Naive thymus-derived CD4-positive, alpha-beta T cell (primary cell): ENCODE measurements at regions of chr15 and their contacts with region 1.

Region 1: DNA sequence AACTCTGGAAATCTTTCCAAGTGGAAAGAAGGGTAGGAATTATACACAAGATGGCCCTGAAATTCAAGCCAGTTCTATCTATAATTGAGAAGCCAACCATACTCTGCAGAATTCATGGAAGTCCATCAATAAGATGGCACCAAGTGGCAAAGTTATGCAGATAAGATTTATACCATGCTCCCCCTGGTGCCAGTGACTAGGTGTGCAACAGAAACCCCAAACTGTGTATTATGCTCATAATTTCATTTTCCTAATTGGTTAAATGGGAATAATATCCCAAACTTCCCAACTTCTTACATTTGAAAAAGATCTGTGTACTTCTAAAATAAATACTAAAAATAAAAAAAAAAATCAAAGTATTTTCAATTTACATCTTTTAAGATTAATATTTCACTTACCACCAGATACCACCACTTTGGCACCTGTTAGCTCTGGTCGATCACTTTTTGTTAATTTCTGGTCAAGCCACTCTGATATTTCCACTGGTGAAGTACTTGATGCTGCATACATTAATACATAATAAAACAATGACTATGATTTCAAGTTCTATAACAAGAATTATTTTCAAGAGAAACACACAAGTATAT is 25.9 kb downstream of the ETFA start:
- DNase-seq: peak in 2 of 9 donors; percentile 2 to 9
- ATAC-seq: no peak
- H3K4me3 ChIP-seq: no peak overlapping the region
- H3K4me3 Mint-ChIP-seq: peak overlapping the region in 2 of 10 donors; percentile 69 to 82
- H3K27ac ChIP-seq: peak overlapping the region; percentile 69
- H3K27ac Mint-ChIP-seq: peak overlapping the region in 2 of 9 donors; percentile 93 to 94
- H3K4me1 ChIP-seq: peaks cover 11 to 27% of the 10 kb centered on the region in 2 donors
- H3K4me1 Mint-ChIP-seq: peaks cover 13 to 42% (median 31%) of the 10 kb centered on the region in 7 donors
- H3K27me3 ChIP-seq: no peaks in the 10 kb centered on the region
- H3K27me3 Mint-ChIP-seq: no peaks in the 10 kb centered on the region

Region 2: DNA sequence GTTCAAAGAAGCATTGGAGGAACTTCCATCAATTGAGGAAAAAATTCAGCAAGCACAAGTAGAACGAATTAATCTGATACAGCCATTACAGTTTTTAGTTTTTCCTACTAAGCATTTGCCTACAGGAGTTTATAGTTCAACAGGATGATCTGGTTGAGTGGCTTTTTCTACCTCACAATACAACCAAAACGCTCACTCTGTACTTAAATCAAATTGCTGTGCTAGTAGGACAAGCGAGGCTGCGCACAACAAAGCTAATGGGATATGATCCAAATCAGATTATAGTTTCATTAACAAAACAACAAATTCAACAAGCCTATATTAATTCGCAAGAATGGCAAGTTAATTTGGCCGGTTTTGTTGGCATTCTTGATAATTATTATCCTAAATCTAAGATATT is 18.3 kb before region 1 on chr15:
- CTCF ChIA-PET with region 1: no interaction called
- POLR2A ChIA-PET with region 1: no interaction called
- intact Hi-C with region 1: no loop called
- DNase-seq: no peak
- ATAC-seq: no peak
- H3K4me3 ChIP-seq: no peak overlapping the region
- H3K4me3 Mint-ChIP-seq: no peak overlapping the region
- H3K27ac ChIP-seq: no peak overlapping the region
- H3K27ac Mint-ChIP-seq: no peak overlapping the region
- H3K4me1 ChIP-seq: no peaks in the 10 kb centered on the region
- H3K4me1 Mint-ChIP-seq: peaks cover 0 to 4% (median 0%) of the 10 kb centered on the region in 7 donors
- H3K27me3 ChIP-seq: no peaks in the 10 kb centered on the region
- H3K27me3 Mint-ChIP-seq: no peaks in the 10 kb centered on the region

Region 3: DNA sequence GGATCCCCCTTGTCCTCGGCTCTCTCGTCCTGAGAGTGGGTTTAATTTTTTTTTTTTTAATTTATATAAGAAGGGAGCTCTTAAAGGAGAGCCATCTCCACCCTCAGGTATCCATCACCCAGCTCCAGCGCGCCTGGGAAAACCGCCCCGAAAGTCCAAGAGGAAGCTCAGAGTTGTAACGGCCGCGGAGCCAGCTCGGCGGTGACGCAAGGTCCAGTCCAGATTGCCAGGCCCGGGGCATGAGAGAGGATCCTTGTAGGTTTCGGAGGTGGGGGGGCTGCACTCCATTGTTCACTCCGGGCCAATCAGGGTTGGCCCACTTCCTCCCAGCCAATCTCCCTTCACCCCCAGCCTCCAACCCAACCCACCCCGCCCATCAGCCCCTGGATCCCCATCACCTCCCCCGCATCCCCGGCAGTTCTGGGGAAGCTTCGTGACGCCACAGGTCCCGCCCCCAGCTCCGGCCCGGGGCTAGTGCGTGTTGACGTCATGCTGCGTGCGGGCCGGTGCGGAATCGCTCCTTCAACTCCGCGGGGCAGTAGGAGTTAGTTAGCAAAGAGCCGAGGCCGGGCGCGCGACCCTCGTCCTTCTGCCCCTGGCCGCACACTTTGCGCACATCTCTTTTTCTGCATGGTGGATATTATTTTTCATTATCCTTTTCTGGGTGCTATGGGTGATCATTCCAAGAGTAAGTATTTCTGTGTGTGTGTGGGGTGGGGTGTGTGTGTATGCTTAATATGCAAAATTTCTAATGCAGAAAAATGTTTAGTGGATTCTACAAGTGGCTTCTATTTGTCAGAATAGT is 51.1 kb after region 1 on chr15 and contains the start of gene ISL2:
- CTCF ChIA-PET with region 1: no interaction called
- POLR2A ChIA-PET with region 1: no interaction called
- intact Hi-C with region 1: loop called in 1 of 2 experiments (anchors 2 kb)
- DNase-seq: peak in 2 of 9 donors; percentile 21 to 83
- ATAC-seq: peak; percentile 52
- H3K4me3 ChIP-seq: peak within 1 kb of the TSS; percentile 28
- H3K4me3 Mint-ChIP-seq: peak within 1 kb of the TSS; percentile 61 to 84 (median 76)
- H3K27ac ChIP-seq: no peak within 1 kb of the TSS
- H3K27ac Mint-ChIP-seq: peak within 1 kb of the TSS in 5 of 9 donors; percentile 5 to 77 (median 39)
- H3K4me1 ChIP-seq: peaks cover 32 to 59% of the 10 kb centered on the region in 2 donors
- H3K4me1 Mint-ChIP-seq: peaks cover 37 to 60% (median 48%) of the 10 kb centered on the region in 7 donors
- H3K27me3 ChIP-seq: peaks cover 11 to 47% of the 10 kb centered on the region in 2 donors
- H3K27me3 Mint-ChIP-seq: peaks cover 73 to 84% (median 75%) of the 10 kb centered on the region in 5 donors
- total RNA-seq, gene ISL2: 0.21 to 0.51 (median 0.27) TPM in 3 of 5 experiments, not detected in the others

Region 4: GRCh38 chr15:76401285-76401684 is 116.0 kb after region 1 on chr15:
- CTCF ChIA-PET with region 1: no interaction called
- POLR2A ChIA-PET with region 1: no interaction called
- intact Hi-C with region 1: no loop called
- DNase-seq: no peak
- ATAC-seq: no peak
- H3K4me3 ChIP-seq: no peak overlapping the region
- H3K4me3 Mint-ChIP-seq: no peak overlapping the region
- H3K27ac ChIP-seq: no peak overlapping the region
- H3K27ac Mint-ChIP-seq: no peak overlapping the region
- H3K4me1 ChIP-seq: no peaks in the 10 kb centered on the region
- H3K4me1 Mint-ChIP-seq: peaks cover 0 to 4% (median 0%) of the 10 kb centered on the region in 7 donors
- H3K27me3 ChIP-seq: no peaks in the 10 kb centered on the region
- H3K27me3 Mint-ChIP-seq: no peaks in the 10 kb centered on the region